Transverse colon (tissue), 4 donors: ENCODE measurements at regions of chr7 and their contacts with region 1.

Region 1: GRCh38 chr7:72622532-72622931 is 205.5 kb downstream of the TYW1B start:
- DNase-seq: no peak
- H3K4me3 ChIP-seq: no peak overlapping the region
- H3K27ac ChIP-seq: no peak overlapping the region
- H3K4me1 ChIP-seq: no peaks in the 10 kb centered on the region
- H3K27me3 ChIP-seq: no peaks in the 10 kb centered on the region
- CTCF ChIP-seq: no peak
- EP300 ChIP-seq: no peak
- POLR2A ChIP-seq: no peak

Region 2: GRCh38 chr7:72504061-72504706 is 118.3 kb before region 1 on chr7:
- in situ Hi-C with region 1: loop called in 1 of 4 experiments (anchors 25 kb)
- intact Hi-C with region 1: no loop called
- DNase-seq: no peak
- H3K4me3 ChIP-seq: no peak overlapping the region
- H3K27ac ChIP-seq: no peak overlapping the region
- H3K4me1 ChIP-seq: no peaks in the 10 kb centered on the region
- H3K27me3 ChIP-seq: no peaks in the 10 kb centered on the region
- CTCF ChIP-seq: no peak
- EP300 ChIP-seq: no peak
- POLR2A ChIP-seq: no peak

Region 3: GRCh38 chr7:72751978-72752377 is 129.4 kb after region 1 on chr7:
- in situ Hi-C with region 1: no loop called
- intact Hi-C with region 1: no loop called
- DNase-seq: no peak
- H3K4me3 ChIP-seq: no peak overlapping the region
- H3K27ac ChIP-seq: no peak overlapping the region
- H3K4me1 ChIP-seq: no peaks in the 10 kb centered on the region
- H3K27me3 ChIP-seq: no peaks in the 10 kb centered on the region
- CTCF ChIP-seq: no peak
- EP300 ChIP-seq: no peak
- POLR2A ChIP-seq: no peak